Breast epithelium (tissue), 4 donors: ENCODE measurements at regions of chr10 and their contacts with region 1.

Region 1: GRCh38 chr10:29392376-29393021 is 103.6 kb downstream of the LYZL1 start:
- DNase-seq: no peak
- H3K4me3 ChIP-seq: no peak overlapping the region
- H3K27ac ChIP-seq: no peak overlapping the region
- H3K4me1 ChIP-seq: no peaks in the 10 kb centered on the region
- H3K27me3 ChIP-seq: no peaks in the 10 kb centered on the region
- CTCF ChIP-seq: peak; percentile 37 to 72 (median 42)
- POLR2A ChIP-seq: no peak

Region 2: DNA sequence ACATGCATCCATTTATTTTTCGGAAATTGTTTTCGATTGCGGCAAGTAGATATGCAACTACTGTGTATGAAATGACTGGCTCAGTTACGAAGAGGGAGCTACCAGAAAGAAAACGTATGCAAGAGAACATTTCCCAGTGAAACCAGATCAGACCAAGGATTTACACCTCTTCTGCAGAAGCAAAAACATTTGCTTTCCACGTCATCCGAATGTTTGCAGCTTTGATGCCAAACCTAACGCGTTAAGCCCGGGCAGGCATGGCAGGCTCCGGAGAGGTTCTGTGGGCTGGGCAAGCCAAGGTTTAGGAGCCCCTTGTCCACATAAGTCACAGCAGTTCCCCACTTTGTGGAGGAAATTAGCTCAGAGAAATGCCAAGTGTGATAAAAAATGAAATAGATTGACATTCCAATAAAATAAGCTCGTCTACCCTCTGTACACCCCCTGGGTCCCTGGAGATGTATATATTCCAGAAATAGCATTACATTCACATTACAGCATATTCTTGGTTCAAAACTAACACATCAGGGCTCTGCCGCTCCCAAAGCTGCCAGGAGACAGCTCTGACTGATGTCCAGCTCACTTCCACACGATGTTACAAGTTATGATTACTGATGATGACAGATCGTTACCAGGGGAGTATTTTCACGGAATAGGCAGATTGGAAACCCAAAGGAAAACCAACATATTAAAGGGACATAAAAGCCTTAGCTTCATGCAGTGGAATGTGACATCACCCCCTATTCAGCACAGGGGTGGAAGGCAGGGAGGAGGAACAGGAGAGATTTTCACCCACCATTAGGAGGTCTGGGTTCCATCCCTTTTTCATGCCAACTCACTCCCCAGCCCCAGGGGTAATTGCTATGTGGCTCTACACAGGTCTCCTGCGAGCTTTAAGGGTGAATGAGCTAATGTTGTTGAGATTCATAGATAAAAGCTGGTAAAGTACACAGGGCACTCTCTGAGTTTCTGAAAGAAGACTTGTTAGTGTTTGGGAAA is 22.1 kb before region 1 on chr10:
- intact Hi-C with region 1: no loop called
- DNase-seq: no peak
- H3K4me3 ChIP-seq: no peak overlapping the region
- H3K27ac ChIP-seq: no peak overlapping the region
- H3K4me1 ChIP-seq: no peaks in the 10 kb centered on the region
- H3K27me3 ChIP-seq: peaks cover 0 to 7% of the 10 kb centered on the region in 2 donors
- CTCF ChIP-seq: no peak
- POLR2A ChIP-seq: no peak

Region 3: GRCh38 chr10:29465384-29465783 is 72.9 kb after region 1 on chr10:
- intact Hi-C with region 1: loop called (anchors 2 kb)
- DNase-seq: no peak
- H3K4me3 ChIP-seq: no peak overlapping the region
- H3K27ac ChIP-seq: no peak overlapping the region
- H3K4me1 ChIP-seq: no peaks in the 10 kb centered on the region
- H3K27me3 ChIP-seq: no peaks in the 10 kb centered on the region
- CTCF ChIP-seq: no peak
- POLR2A ChIP-seq: no peak

Region 4: DNA sequence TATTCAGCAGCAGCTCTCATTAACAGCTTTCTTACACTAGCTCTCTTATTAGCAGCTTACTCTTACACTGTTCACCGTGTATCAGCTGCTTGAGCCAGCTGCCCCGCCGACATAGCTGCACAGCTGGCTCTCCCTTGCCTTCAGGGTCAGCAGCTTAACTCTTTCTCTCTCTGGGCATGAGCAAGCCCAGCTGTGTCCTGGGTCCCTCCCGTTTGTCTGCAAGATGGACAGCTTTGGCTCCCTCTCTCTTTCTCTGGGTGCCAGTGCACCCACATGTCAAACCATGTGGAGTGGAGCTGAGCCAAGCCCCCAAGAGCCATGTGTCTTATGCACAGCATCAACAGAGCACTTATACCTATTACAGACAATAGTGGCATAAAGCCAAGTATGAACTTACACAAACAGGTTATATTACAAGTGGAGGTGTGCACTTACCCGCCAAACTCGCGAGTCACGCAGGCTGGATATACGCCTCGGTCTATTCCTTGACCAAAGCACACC is 992.3 kb after region 1 on chr10:
- intact Hi-C with region 1: no loop called
- DNase-seq: no peak
- H3K4me3 ChIP-seq: no peak overlapping the region
- H3K27ac ChIP-seq: no peak overlapping the region
- H3K4me1 ChIP-seq: no peaks in the 10 kb centered on the region
- H3K27me3 ChIP-seq: no peaks in the 10 kb centered on the region
- CTCF ChIP-seq: no peak
- POLR2A ChIP-seq: no peak